ENCODE measurements at regions of chr7 and their contacts with region 1.

Region 1: GRCh38 chr7:41696314-41696916 is 6.5 kb downstream of the INHBA start:
- DNase-seq: no peak
- H3K4me3 ChIP-seq: peak overlapping the region; percentile 91
- CTCF ChIP-seq: peak; percentile 74

Region 2: DNA sequence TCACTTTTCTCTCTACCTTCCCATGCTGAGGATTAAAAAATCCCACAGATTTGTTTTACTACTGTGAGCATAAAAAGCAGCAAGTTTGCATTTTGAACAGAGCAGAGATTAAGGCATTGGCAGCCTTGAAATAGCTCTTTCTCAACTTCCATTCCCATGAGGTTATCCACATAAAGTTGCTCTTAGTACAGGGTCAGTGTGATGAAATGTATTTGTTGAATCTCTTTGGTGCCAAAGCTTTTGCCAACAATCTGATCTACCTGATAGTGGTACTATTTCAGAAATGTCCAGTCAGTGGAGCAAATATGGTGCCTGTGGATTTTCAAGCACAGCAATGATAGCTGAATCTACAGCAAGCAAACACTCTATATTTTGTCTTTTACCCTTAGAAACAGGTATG is 248.3 kb before region 1 on chr7:
- CTCF ChIA-PET with region 1: no interaction called
- POLR2A ChIA-PET with region 1: no interaction called
- DNase-seq: peak; percentile 51
- H3K4me3 ChIP-seq: no peak overlapping the region
- CTCF ChIP-seq: no peak

Region 3: DNA sequence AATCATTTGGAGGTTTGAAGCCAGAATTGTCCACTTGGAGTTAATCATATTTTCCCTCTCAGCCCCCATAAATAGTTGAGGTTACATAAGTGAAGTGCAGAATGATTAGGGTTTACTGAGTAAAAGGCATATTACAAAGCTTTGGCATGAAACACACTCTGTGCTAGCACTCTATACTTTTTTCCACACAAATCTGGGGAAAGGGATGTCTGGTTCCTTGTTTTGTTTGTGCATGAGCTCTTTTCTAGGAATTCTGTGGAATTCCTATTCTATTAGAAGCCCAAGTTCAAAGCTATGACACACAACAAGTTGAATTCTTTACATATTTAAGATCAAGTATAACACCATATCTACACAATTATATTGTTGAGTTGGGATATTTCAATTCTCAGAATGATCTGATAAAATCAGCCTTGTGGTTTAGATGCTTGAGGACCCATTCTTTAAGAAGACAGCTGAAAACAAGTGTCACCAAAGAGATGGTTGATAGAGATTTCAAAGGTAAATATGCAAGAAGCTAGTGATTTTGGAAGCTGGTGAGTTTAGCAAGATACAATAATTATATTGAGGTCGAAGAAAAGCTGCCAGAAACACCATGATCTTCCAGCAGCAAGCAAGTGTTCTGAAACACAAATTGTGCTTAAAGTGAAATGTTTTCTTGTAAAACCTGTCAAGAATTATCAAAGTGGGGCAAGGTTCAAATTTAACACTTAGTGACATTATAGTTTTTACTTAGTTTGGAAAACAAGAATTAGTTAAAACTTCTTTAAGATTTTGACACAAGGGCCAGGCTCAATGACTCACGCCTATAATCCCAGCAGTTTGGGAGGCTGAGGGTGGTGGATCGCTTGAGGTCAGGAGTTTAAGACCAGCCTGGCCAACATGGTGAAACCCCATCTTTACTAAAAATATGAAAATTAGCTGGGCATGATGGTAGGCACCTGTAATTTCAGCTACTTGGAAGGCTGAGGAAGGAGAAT is 116.2 kb before region 1 on chr7:
- CTCF ChIA-PET with region 1: interaction called, 10 read pairs
- POLR2A ChIA-PET with region 1: interaction called, 3 read pairs
- DNase-seq: peak; percentile 94
- H3K4me3 ChIP-seq: no peak overlapping the region
- CTCF ChIP-seq: no peak